ENCODE measurements at regions of chrX and their contacts with region 1.

Region 1: DNA sequence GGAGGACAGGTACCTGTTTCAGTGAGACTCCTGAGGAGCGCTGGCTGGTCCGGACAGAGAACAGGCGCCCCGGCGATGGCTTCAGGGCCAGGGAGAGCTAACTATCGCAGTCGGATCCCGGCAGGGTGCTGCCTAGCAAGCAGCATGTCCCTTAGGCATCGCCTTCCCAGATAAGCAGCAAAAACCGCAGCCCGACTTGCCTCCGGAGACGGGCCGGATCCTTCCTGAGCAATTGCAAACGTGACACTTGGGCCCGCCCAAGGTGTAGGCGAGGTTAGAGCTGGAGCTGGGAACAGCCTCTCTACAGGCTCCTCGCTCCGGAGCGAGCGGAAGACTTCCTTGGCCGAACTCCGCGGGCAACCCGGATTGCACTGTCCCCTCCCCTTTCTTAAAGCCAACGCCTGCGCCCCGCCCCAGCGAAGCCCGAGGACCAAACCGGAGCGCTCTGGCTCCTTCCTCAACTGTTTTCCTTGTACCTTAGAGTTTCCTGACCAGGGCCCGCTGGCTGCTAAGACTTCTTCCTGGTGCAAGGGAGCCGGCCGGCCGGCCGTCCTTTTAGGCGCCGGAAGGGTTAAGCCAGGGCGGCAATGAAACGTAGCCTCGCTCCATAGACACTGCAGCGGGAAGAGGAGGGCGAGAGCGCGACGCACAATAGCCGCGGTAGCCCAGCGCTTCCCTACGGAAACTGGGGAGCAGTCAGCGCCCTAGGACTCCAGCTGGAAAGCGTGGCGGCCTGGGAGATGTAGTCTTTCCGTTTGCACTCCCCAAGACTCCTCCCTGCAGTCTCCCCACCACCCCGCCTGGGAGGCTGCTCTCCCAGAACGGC is at the start of gene OPHN1:
- DNase-seq: peak; percentile 84
- H3K4me3 Mint-ChIP-seq: peak within 1 kb of the TSS; percentile 83
- H3K27ac Mint-ChIP-seq: peak within 1 kb of the TSS; percentile 39
- H3K4me1 Mint-ChIP-seq: peaks cover 3% of the 10 kb centered on the region
- H3K27me3 Mint-ChIP-seq: peaks cover 22% of the 10 kb centered on the region
- CTCF ChIP-seq: no peak
- total RNA-seq, gene OPHN1: 4.0 and 4.8 TPM in 2 replicates

Region 2: DNA sequence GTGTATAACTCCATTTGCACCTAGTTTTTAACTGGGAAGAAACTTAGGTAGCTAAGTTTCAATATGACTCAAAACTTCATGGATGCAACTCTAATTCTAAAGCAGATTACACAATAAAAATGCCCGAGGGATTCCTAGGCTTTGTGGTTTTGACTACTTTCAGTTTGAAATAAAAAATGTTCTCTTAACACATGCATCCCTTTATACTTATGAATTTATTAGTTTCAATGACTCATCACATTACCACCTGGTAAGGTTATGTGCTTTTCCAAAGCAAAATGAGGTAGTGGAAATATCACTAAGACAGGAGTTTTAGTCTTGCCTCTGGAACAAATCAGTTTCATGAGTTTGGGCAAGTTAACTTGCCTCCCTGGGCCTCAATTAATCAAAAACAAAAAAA is 125.6 kb before region 1 on chrX:
- CTCF ChIA-PET with region 1: interaction called, 4 read pairs
- POLR2A ChIA-PET with region 1: interaction called, 4 read pairs
- intact Hi-C with region 1: loop called (anchors 10 kb)
- DNase-seq: peak; percentile 91
- H3K4me3 Mint-ChIP-seq: no peak overlapping the region
- H3K27ac Mint-ChIP-seq: peak overlapping the region; percentile 27
- H3K4me1 Mint-ChIP-seq: peaks cover 6% of the 10 kb centered on the region
- H3K27me3 Mint-ChIP-seq: no peaks in the 10 kb centered on the region
- CTCF ChIP-seq: no peak

Region 3: GRCh38 chrX:68498508-68499379 is 65.4 kb after region 1 on chrX and contains the start of gene YIPF6:
- CTCF ChIA-PET with region 1: no interaction called
- POLR2A ChIA-PET with region 1: interaction called, 11 read pairs
- intact Hi-C with region 1: loop called (anchors 10 kb)
- DNase-seq: peak; percentile 67
- H3K4me3 Mint-ChIP-seq: peak within 1 kb of the TSS; percentile 98
- H3K27ac Mint-ChIP-seq: peak within 1 kb of the TSS; percentile 99
- H3K4me1 Mint-ChIP-seq: peaks cover 5% of the 10 kb centered on the region
- H3K27me3 Mint-ChIP-seq: peaks cover 14% of the 10 kb centered on the region
- CTCF ChIP-seq: no peak
- total RNA-seq, gene YIPF6: 44.6 and 55.4 TPM in 2 replicates

Measured in MCF 10A (cell line).